ENCODE measurements at regions of chr5 and their contacts with region 1.

Region 1: DNA sequence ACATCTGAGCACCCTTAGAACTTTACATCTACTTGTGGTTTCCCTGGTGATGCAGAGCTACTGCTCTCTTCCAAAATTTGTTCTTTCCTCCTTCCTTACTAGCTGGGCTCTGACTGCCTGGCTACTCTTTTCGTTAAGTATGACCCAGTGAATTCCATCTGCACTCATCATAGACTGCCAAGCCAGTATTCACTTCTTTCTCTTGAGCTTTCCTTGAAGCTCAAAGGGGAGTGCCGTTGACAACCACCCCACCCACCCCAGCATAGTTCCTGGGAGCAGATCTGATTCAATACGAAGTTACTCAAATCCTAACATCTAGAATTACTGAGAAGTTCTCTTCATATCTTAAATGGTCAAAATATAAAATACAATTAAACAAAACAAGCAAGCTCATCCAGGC is 190.5 kb downstream of the ADAMTS12 start:
- DNase-seq: peak; percentile 61
- ATAC-seq: peak; percentile 37; the same call in 1 of the 2 replicates
- H3K4me3 ChIP-seq: no peak overlapping the region
- H3K27ac ChIP-seq: no peak overlapping the region
- H3K4me1 ChIP-seq: no peaks in the 10 kb centered on the region; the same call in 1 of the 2 replicates
- H3K27me3 ChIP-seq: no peaks in the 10 kb centered on the region
- CTCF ChIP-seq: no peak
- POLR2A ChIP-seq: no peak
- RAD21 ChIP-seq: no peak

Region 2: GRCh38 chr5:33690374-33691135 is 10.7 kb before region 1 on chr5:
- CTCF ChIA-PET with region 1: no interaction called
- POLR2A ChIA-PET with region 1: no interaction called
- dilution Hi-C with region 1: no loop called
- in situ Hi-C with region 1: no loop called
- intact Hi-C with region 1: loop called (anchors 1 kb)
- DNase-seq: peak; percentile 96
- ATAC-seq: peak; percentile 84
- H3K4me3 ChIP-seq: no peak overlapping the region
- H3K27ac ChIP-seq: no peak overlapping the region
- H3K4me1 ChIP-seq: peaks cover 3% of the 10 kb centered on the region; the same call in 1 of the 2 replicates
- H3K27me3 ChIP-seq: no peaks in the 10 kb centered on the region
- CTCF ChIP-seq: no peak
- POLR2A ChIP-seq: no peak
- RAD21 ChIP-seq: no peak

Measured in IMR-90 (cell line).